Caco-2 (cell line): ENCODE measurements at regions of chr9 and their contacts with region 1.

Region 1: GRCh38 chr9:110256380-110257096 is at the start of gene TXN:
- DNase-seq: peak; percentile 88 to 90
- H3K4me3 ChIP-seq: peak within 1 kb of the TSS; percentile 96
- H3K4me3 Mint-ChIP-seq: peak within 1 kb of the TSS; percentile 98
- H3K27ac Mint-ChIP-seq: peak within 1 kb of the TSS; percentile 99
- H3K4me1 ChIP-seq: peaks cover 39% of the 10 kb centered on the region
- H3K4me1 Mint-ChIP-seq: peaks cover 26% of the 10 kb centered on the region
- H3K27me3 ChIP-seq: no peaks in the 10 kb centered on the region
- H3K27me3 Mint-ChIP-seq: no peaks in the 10 kb centered on the region
- CTCF ChIP-seq: no peak
- total RNA-seq, gene TXN: 446 and 476 TPM in 2 replicates

Region 2: GRCh38 chr9:110183208-110184145 is 73.1 kb before region 1 on chr9:
- CTCF ChIA-PET with region 1: interaction called, 6 read pairs
- POLR2A ChIA-PET with region 1: interaction called, 3 read pairs
- intact Hi-C with region 1: loop called (anchors 2 kb)
- DNase-seq: peak; percentile 79 to 81
- H3K4me3 ChIP-seq: no peak overlapping the region
- H3K4me3 Mint-ChIP-seq: no peak overlapping the region
- H3K27ac Mint-ChIP-seq: no peak overlapping the region
- H3K4me1 ChIP-seq: no peaks in the 10 kb centered on the region
- H3K4me1 Mint-ChIP-seq: no peaks in the 10 kb centered on the region
- H3K27me3 ChIP-seq: no peaks in the 10 kb centered on the region
- H3K27me3 Mint-ChIP-seq: no peaks in the 10 kb centered on the region
- CTCF ChIP-seq: peak; percentile 70 to 87

Region 3: DNA sequence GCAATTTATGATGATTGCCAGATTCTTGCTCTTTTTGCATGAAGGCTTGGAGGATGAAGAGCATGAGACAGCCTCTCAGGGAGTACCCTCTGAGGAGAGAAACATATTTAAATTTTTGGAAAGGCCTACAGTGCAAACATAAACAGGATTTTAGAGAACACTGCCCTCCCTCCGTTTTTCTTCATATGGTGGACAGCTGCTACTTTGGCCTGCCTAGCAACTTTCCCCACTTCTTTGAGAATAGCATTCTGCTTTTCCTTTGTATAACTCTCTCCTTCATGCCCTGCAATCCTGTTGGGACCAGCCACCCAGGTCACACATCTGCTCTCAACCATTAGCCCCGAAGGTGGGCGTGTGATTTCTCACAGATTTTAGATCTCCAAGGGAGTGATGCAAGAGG is 20.2 kb after region 1 on chr9:
- CTCF ChIA-PET with region 1: no interaction called
- POLR2A ChIA-PET with region 1: interaction called, 12 read pairs
- intact Hi-C with region 1: loop called (anchors 1 kb)
- DNase-seq: no peak
- H3K4me3 ChIP-seq: no peak overlapping the region
- H3K4me3 Mint-ChIP-seq: no peak overlapping the region
- H3K27ac Mint-ChIP-seq: no peak overlapping the region
- H3K4me1 ChIP-seq: peaks cover 10% of the 10 kb centered on the region
- H3K4me1 Mint-ChIP-seq: no peaks in the 10 kb centered on the region
- H3K27me3 ChIP-seq: no peaks in the 10 kb centered on the region
- H3K27me3 Mint-ChIP-seq: no peaks in the 10 kb centered on the region
- CTCF ChIP-seq: no peak

Region 4: DNA sequence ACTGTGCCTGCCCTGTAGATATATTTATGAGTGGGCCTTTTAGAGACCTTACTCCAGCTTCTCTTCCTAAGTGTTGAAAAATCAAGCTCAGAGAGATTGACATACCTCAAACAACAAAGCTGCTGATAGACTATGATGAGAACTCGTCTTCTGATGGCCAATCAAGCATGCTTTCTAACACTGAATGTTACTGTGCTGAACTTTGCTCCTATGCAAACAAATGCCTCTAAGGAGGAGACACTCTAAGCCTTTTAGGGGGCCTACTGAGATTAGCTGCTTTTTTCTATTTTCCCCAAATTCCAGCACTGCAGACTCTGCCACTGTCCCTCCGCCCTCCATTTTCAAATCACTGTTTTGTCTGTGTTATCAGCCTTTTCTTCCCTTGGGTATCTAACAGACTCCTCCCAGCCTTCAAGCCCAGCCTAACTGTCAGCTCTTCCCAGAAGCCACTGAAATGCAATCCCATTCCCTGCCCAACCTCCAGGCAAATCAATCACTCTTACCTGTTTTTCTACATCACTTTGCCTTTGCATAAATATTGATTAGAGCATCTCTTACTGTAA is 41.6 kb after region 1 on chr9:
- CTCF ChIA-PET with region 1: no interaction called
- POLR2A ChIA-PET with region 1: interaction called, 19 read pairs
- intact Hi-C with region 1: loop called (anchors 2 kb)
- DNase-seq: peak; percentile 74 to 76
- H3K4me3 ChIP-seq: no peak overlapping the region
- H3K4me3 Mint-ChIP-seq: peak overlapping the region; percentile 45
- H3K27ac Mint-ChIP-seq: peak overlapping the region; percentile 54
- H3K4me1 ChIP-seq: peaks cover 24% of the 10 kb centered on the region
- H3K4me1 Mint-ChIP-seq: peaks cover 21% of the 10 kb centered on the region
- H3K27me3 ChIP-seq: no peaks in the 10 kb centered on the region
- H3K27me3 Mint-ChIP-seq: no peaks in the 10 kb centered on the region
- CTCF ChIP-seq: no peak

Region 5: GRCh38 chr9:110340314-110340713 is 83.8 kb after region 1 on chr9:
- CTCF ChIA-PET with region 1: no interaction called
- POLR2A ChIA-PET with region 1: interaction called, 7 read pairs
- intact Hi-C with region 1: loop called (anchors 5 kb)
- DNase-seq: peak in 1 of 2 experiments; percentile 32
- H3K4me3 ChIP-seq: no peak overlapping the region
- H3K4me3 Mint-ChIP-seq: no peak overlapping the region
- H3K27ac Mint-ChIP-seq: no peak overlapping the region
- H3K4me1 ChIP-seq: no peaks in the 10 kb centered on the region; the same call in 1 of the 2 replicates
- H3K4me1 Mint-ChIP-seq: no peaks in the 10 kb centered on the region
- H3K27me3 ChIP-seq: no peaks in the 10 kb centered on the region
- H3K27me3 Mint-ChIP-seq: no peaks in the 10 kb centered on the region
- CTCF ChIP-seq: peak; percentile 49 to 56

Region 6: DNA sequence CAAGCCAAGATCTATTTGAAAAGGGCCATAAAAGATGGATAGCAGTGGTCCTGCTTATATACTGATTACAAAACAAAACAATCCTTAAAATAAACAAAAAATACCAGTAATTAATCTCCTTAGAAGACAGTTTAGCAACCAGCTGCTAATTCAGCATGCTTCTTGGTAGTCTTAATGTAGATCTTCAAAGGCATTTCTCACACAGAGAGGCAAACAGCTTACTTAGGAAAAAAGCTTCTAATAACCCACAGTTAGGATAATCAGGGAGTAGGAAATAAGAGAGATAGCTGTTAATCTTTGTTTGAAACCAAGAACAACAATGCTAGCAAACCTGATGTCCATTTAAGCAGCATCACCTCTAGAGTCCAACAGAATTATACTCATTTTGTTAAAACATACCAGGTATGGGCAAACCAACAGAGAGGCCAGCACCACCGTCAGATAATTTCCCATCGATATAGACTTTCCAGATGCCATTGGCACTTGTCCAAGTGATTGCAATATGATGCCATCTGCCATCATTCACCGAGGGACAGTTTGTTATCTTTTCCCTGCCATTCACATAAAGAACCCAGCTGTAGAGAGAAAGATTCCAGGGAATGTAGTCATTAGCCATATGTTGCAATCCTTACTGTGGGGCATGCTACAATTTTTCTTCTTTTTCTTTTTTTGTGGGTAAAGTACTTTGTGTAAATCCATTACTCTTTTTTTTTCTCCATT is 186.8 kb after region 1 on chr9:
- CTCF ChIA-PET with region 1: no interaction called
- POLR2A ChIA-PET with region 1: no interaction called
- intact Hi-C with region 1: no loop called
- DNase-seq: no peak
- H3K4me3 ChIP-seq: no peak overlapping the region
- H3K4me3 Mint-ChIP-seq: no peak overlapping the region
- H3K27ac Mint-ChIP-seq: no peak overlapping the region
- H3K4me1 ChIP-seq: no peaks in the 10 kb centered on the region
- H3K4me1 Mint-ChIP-seq: no peaks in the 10 kb centered on the region
- H3K27me3 ChIP-seq: no peaks in the 10 kb centered on the region
- H3K27me3 Mint-ChIP-seq: peaks cover 5% of the 10 kb centered on the region
- CTCF ChIP-seq: no peak

Region 7: GRCh38 chr9:110744753-110745384 is 488.3 kb after region 1 on chr9:
- CTCF ChIA-PET with region 1: no interaction called
- POLR2A ChIA-PET with region 1: no interaction called
- intact Hi-C with region 1: no loop called
- DNase-seq: no peak
- H3K4me3 ChIP-seq: no peak overlapping the region
- H3K4me3 Mint-ChIP-seq: no peak overlapping the region
- H3K27ac Mint-ChIP-seq: no peak overlapping the region
- H3K4me1 ChIP-seq: peaks cover 7% of the 10 kb centered on the region; the same call in 1 of the 2 replicates
- H3K4me1 Mint-ChIP-seq: no peaks in the 10 kb centered on the region
- H3K27me3 ChIP-seq: no peaks in the 10 kb centered on the region
- H3K27me3 Mint-ChIP-seq: no peaks in the 10 kb centered on the region
- CTCF ChIP-seq: no peak

Region 8: GRCh38 chr9:111284703-111285102 is 1028.2 kb after region 1 on chr9:
- CTCF ChIA-PET with region 1: no interaction called
- POLR2A ChIA-PET with region 1: interaction called, 12 read pairs
- intact Hi-C with region 1: no loop called
- DNase-seq: no peak
- H3K4me3 ChIP-seq: no peak overlapping the region
- H3K4me3 Mint-ChIP-seq: no peak overlapping the region
- H3K27ac Mint-ChIP-seq: no peak overlapping the region
- H3K4me1 ChIP-seq: no peaks in the 10 kb centered on the region
- H3K4me1 Mint-ChIP-seq: peaks cover 6% of the 10 kb centered on the region
- H3K27me3 ChIP-seq: no peaks in the 10 kb centered on the region
- H3K27me3 Mint-ChIP-seq: peaks cover 4% of the 10 kb centered on the region
- CTCF ChIP-seq: no peak